Activated T-helper 2 cell treated with anti-CD3 and anti-CD28 coated beads, Interferon-gamma antibody, Interleukin-2, Interleukin-4, amounts not matched to agents 10 μg/mL and 5 μg/mL and 100 μg/mL, durations not matched to agents 14 hours and 24 hours and 36 hours (primary cell): ENCODE measurements at regions of chr10 and their contacts with region 1.

Region 1: DNA sequence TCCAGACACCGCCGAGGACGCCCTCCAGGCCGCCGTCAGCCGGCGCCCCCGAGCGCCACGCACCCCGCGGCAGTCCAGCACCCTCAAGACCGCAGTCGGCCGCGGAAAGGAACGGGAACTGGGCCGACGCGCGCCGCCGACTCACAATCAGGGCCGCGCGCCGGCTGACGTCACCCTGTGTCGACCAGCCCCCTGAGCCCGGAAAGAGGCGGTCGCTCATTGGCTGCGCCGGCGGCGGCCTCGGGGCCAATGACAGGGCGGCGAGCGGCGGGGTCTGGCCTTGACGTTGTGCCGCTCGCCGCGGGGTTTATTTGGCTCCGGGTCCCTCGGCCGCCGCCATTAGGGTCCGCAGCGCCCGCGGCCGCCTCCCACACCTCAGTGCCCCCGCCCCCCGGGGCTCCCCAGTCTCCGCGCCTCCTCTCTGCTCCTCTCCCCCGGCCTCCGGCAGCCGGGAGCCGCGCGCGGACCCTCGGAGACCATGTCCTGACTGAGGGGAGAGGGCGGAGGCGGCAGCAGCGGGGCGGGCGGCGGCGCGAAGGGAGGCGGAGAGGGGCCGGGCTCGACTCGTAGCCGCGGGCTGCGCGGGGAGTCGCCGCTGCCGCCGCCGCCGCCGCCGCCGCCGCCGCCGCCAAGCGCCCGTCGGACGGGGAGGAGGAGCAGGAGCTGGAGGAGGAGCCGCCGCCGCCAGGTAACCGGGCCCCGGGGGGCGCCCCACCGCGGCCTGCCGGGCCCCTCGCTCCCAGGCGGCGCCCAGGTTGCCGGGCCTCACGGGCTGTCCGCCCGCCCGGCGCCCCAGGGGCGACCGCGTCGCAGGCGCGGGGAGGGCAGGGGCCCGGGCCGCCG is 25.1 kb upstream of the ZRANB1 start:
- DNase-seq: peak; percentile 94
- H3K4me3 Mint-ChIP-seq: peak overlapping the region; percentile 84
- H3K27ac Mint-ChIP-seq: peak overlapping the region; percentile 85
- H3K4me1 Mint-ChIP-seq: peaks cover 37% of the 10 kb centered on the region
- H3K27me3 Mint-ChIP-seq: peaks cover 7% of the 10 kb centered on the region

Region 2: DNA sequence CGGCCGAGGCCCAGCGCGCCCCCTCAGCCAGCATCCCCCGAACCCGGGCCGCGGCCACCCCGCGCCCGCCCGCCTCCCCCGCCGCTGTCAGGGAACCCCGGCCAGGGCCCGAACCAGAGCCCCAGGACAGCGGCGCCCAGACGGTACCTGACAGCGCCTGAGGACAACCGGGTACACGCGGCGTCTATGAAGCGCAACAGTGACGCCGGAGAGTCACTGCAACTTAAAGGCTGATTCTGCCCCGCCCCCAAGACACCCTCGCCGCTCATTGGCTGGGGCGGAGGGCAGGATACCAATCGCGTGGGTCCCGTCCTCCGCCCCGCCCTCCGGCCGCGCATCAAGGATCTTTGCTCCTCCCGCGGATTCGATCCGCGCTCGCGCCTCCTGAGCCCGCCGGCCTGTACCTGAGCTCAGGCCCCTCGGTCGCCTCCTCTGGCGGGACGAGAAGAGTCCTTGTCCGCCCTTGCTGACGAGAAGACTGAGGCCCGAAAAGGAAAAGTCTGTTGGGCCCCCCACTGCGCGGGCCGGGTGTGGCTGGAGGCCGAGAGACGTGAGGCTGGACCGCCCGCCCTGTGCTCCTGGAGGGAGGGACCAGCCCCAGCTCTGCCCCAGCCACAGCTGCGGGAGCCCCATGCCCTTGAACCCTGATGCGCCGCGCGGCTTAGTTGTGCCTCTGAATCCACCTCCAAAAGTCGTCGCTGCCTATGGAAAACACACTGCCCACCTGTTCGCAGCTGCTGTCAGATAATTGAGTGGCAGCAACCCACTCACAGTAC is 497.9 kb before region 1 on chr10 and contains the start of gene OAT:
- intact Hi-C with region 1: loop called (anchors 5 kb)
- DNase-seq: peak; percentile 93
- H3K4me3 Mint-ChIP-seq: peak within 1 kb of the TSS; percentile 81
- H3K27ac Mint-ChIP-seq: no peak within 1 kb of the TSS
- H3K4me1 Mint-ChIP-seq: peaks cover 8% of the 10 kb centered on the region
- H3K27me3 Mint-ChIP-seq: peaks cover 10% of the 10 kb centered on the region
- total RNA-seq, gene OAT: 42.6 and 45.8 TPM in 2 replicates

Region 3: GRCh38 chr10:124461438-124462347 is 455.1 kb before region 1 on chr10 and contains the start of gene LHPP:
- intact Hi-C with region 1: loop called (anchors 5 kb)
- DNase-seq: peak; percentile 85
- H3K4me3 Mint-ChIP-seq: peak within 1 kb of the TSS; percentile 86
- H3K27ac Mint-ChIP-seq: peak within 1 kb of the TSS; percentile 92
- H3K4me1 Mint-ChIP-seq: peaks cover 22% of the 10 kb centered on the region
- H3K27me3 Mint-ChIP-seq: peaks cover 2% of the 10 kb centered on the region
- total RNA-seq, gene LHPP: 8.1 and 8.4 TPM in 2 replicates

Region 4: DNA sequence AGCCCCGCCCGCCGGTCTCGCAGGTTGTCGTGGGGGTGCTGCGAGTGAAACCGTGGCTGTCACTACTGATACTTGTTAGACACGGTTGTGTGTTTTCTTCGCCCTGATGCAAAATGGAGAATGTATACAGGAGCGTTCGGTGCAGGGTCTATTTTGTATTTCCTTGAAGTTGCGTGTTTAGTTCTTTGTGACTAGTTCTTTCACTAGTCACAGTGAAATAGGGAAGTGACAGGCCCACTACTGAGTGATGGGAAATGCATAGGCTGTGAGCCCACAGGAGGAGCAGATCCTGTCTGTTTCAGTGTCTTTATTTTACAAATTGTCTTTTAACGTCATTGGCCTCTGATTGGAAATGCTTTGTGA is 114.5 kb before region 1 on chr10:
- intact Hi-C with region 1: loop called (anchors 2 kb)
- DNase-seq: no peak
- H3K4me3 Mint-ChIP-seq: peak overlapping the region; percentile 90
- H3K27ac Mint-ChIP-seq: peak overlapping the region; percentile 79
- H3K4me1 Mint-ChIP-seq: peaks cover 14% of the 10 kb centered on the region
- H3K27me3 Mint-ChIP-seq: peaks cover 3% of the 10 kb centered on the region

Region 5: DNA sequence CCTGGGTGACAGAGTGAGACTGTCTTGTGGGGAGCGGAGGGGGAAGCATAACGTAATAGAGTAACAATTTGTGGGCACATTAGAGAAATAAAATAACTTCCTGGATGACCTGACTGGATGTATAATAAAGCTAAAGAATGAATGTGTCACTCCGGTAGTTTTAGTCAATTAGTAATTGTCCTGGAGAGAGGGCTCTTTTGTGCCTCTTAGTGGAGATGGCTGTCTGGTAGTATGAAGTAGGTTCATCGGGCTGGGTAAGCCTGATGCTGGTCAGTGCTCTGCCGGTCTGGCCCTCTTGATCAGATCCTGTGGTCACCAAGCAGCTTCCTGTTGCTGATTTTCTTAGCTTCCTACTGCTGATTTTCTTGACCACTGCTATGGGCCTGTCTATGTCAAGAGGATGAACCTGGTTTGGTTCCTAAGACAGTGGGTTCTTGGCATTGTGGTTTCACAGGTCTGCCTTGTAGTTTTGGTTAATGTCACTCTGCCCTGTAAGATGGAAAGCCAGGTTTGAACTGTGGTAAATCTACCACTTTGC is 59.2 kb after region 1 on chr10:
- intact Hi-C with region 1: no loop called
- DNase-seq: no peak
- H3K4me3 Mint-ChIP-seq: no peak overlapping the region
- H3K27ac Mint-ChIP-seq: no peak overlapping the region
- H3K4me1 Mint-ChIP-seq: peaks cover 15% of the 10 kb centered on the region
- H3K27me3 Mint-ChIP-seq: no peaks in the 10 kb centered on the region

Region 6: DNA sequence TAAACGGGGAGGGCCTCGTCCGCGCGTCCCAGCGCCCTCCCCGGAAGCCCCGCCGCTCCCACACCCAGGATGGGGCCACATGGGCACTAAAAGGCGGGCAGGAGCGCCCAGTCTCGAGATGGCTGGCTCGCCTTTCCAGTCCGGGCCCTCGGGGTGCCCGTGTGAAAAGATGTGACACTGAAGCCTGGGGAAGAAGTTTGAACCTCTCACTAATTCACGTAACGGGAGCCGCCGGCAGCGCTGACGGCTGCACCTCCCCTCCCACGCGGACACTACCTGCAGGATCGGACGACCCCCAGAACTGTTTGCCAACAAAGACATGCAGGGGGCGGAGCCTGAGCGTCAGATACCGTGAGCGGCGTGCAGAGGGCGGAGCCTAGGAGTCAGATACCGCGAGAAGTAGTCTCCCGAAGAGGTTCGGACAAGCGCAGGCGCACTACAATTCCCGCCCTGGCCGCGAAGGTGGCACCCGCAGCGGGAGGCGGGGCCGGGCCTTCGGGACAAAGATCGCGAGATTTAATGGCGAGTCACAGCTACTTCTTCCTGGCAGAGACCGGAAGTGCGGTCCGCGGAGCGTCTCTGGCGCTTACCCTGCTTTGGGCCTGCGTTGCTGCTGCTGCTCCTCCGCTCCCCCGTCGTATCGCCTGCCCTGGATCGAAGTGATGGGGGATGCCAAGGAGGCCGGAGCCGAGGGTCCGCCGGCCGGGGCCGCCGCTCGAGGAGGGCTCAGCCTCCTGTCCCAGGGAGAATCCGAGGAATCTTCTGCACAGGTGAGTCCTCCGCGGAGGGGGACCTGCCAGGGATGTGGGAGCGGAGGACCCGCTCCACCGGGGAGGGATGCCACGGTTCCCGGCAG is 802.6 kb after region 1 on chr10 and contains the start of gene EDRF1:
- intact Hi-C with region 1: loop called (anchors 2 kb)
- DNase-seq: peak; percentile 99
- H3K4me3 Mint-ChIP-seq: peak within 1 kb of the TSS; percentile 96
- H3K27ac Mint-ChIP-seq: peak within 1 kb of the TSS; percentile 98
- H3K4me1 Mint-ChIP-seq: peaks cover 21% of the 10 kb centered on the region
- H3K27me3 Mint-ChIP-seq: no peaks in the 10 kb centered on the region
- total RNA-seq, gene EDRF1: 40.3 and 40.7 TPM in 2 replicates

Region 7: DNA sequence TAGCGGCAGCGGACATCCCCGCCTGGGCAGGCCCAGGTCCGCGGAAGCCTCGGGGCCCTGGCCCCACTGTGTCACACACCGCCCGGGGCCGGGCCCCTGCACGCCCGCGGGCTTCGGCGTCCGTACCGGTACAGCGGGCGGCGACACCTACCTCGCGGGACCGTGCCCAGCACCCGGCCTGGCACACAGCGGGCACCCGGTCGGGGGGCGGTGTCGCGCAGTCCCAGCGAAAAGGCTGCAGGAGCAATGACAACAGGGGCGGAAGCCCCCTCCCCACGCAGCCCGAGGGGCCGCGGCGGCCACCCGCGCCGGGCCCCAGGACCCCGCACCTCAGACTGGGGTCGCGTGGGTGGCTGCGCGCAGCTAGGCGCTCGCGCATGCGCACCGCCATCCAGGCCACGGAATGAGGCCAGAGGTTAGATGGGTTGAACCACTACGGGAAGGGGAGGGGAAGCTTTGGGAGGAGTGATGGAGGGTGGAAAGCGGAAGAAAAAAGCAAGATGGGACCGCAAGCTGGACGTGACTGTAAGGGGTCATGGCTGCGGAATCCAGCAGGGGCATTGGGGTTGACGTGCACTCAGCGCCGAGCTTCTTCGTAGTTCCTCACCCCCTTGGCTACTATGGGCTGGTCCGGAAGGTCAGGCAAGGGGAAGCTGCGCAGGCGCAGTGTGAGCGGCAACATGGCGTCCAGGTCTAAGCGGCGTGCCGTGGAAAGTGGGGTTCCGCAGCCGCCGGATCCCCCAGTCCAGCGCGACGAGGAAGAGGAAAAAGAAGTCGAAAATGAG is 906.3 kb after region 1 on chr10 and contains the starts of genes BCCIP and UROS:
- intact Hi-C with region 1: loop called (anchors 5 kb)
- DNase-seq: peak; percentile 89
- H3K4me3 Mint-ChIP-seq: peak within 1 kb of the TSS; percentile 82
- H3K27ac Mint-ChIP-seq: peak within 1 kb of the TSS; percentile 83
- H3K4me1 Mint-ChIP-seq: peaks cover 18% of the 10 kb centered on the region
- H3K27me3 Mint-ChIP-seq: no peaks in the 10 kb centered on the region
- total RNA-seq, gene BCCIP: 110 and 114 TPM in 2 replicates
- total RNA-seq, gene UROS: 45.3 and 46.9 TPM in 2 replicates